HCT116 (cell line): ENCODE measurements at regions of chr10 and their contacts with region 1.

Region 1: GRCh38 chr10:12902135-12902572 is 99.4 kb downstream of the CCDC3 start:
- DNase-seq: peak; percentile 33
- ATAC-seq: peak; percentile 80
- H3K4me3 ChIP-seq: no peak overlapping the region
- H3K27ac ChIP-seq: no peak overlapping the region
- H3K4me1 ChIP-seq: no peaks in the 10 kb centered on the region
- H3K27me3 ChIP-seq: no peaks in the 10 kb centered on the region
- CTCF ChIP-seq: peak; percentile 75 to 93 (median 75)
- POLR2A ChIP-seq: no peak
- RAD21 ChIP-seq: peak; percentile 79

Region 2: GRCh38 chr10:12720217-12720981 is 181.8 kb before region 1 on chr10:
- CTCF ChIA-PET with region 1: interaction called, 10 read pairs
- POLR2A ChIA-PET with region 1: no interaction called
- RAD21 ChIA-PET with region 1: interaction called in 1 of 2 experiments, 3 read pairs
- intact Hi-C with region 1: loop called (anchors 5 kb)
- DNase-seq: peak; percentile 96
- ATAC-seq: peak; percentile 94
- H3K4me3 ChIP-seq: 0 out of 4 replicates have a peak overlapping the region, but pooled peaks of 1 of the 2 experiments have one; percentile 2
- H3K27ac ChIP-seq: peak overlapping the region; percentile 54; the same call in 1 of the 2 replicates
- H3K4me1 ChIP-seq: peaks cover 24 to 27% of the 10 kb centered on the region in 2 experiments
- H3K27me3 ChIP-seq: peaks cover 11% of the 10 kb centered on the region; the same call in 1 of the 2 replicates
- CTCF ChIP-seq: no peak
- POLR2A ChIP-seq: no peak
- RAD21 ChIP-seq: peak; percentile 22; the same call in 1 of the 2 replicates

Region 3: DNA sequence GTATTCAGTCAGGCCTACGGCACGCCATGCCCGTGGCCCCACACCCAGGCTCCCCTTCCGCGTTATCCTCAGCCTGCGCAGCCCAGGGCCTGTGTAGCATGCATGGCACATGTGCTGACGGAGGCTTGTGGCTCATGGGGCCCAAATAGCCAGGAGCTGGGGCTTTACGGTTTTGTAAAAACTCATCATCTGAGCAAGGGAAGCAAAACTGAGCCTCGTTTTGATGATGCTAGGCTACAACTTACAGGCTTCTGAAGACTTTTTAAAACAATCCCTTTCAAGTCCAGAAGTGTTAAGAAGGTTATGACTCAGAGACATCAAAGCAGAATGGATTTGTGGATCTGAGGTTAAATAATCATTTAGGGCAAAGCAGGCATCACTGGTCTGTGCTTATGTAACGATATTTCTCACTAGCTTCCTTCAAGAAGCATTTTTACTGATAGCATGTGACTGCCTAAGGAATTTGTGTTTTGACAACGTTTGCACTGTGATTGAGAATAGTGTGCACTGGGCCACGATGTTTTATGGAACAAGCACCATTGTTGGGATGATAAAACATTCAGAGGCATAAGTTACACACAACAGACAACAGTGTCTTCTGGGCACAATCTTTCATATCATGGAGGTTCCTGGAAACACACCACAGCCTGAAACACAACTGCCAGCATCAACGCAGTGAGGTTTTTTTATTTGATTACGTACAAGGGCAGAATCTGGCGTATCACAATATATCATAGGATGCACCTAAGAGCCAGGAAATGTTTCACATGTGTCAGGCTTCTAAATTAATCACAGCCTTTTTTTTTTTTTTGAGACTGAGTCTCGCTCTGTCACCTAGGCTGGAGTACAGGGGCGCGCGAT is 175.0 kb before region 1 on chr10:
- CTCF ChIA-PET with region 1: interaction called, 10 read pairs
- POLR2A ChIA-PET with region 1: no interaction called
- RAD21 ChIA-PET with region 1: no interaction called
- intact Hi-C with region 1: loop called (anchors 5 kb)
- DNase-seq: no peak
- ATAC-seq: peak; percentile 53
- H3K4me3 ChIP-seq: no peak overlapping the region
- H3K27ac ChIP-seq: no peak overlapping the region
- H3K4me1 ChIP-seq: peaks cover 16 to 23% of the 10 kb centered on the region in 2 experiments
- H3K27me3 ChIP-seq: peaks cover 13% of the 10 kb centered on the region; the same call in 1 of the 2 replicates
- CTCF ChIP-seq: no peak
- POLR2A ChIP-seq: no peak
- RAD21 ChIP-seq: no peak

Region 4: DNA sequence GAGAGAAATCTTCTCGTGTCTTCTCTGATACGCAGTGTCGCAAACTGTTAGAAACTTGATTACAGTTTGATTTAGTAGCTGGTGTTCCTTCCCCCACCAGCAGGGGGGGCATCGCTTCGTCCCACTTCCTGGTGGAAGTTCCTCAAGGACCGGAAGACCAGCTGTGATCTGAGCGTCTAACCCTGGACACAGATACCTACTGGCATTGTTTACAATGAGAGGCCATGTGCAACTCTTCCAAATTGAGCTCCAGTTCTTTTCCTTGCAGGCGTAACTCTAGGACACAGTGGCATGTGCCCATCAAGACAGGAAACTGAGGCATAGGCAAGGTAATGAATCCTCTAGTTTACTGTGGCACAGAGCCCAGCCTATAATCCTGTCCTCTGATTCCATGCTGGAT is 119.6 kb before region 1 on chr10:
- CTCF ChIA-PET with region 1: interaction called, 16 read pairs
- POLR2A ChIA-PET with region 1: no interaction called
- RAD21 ChIA-PET with region 1: interaction called, 3 to 4 read pairs
- intact Hi-C with region 1: loop called (anchors 2 kb)
- DNase-seq: peak; percentile 42
- ATAC-seq: peak; percentile 91
- H3K4me3 ChIP-seq: peak overlapping the region; percentile 20 to 27; a peak in 2 of 4 replicates
- H3K27ac ChIP-seq: no peak overlapping the region
- H3K4me1 ChIP-seq: peaks cover 2 to 9% of the 10 kb centered on the region in 2 experiments; a peak in 3 of 4 replicates
- H3K27me3 ChIP-seq: no peaks in the 10 kb centered on the region
- CTCF ChIP-seq: peak; percentile 50 to 94 (median 92); a peak in 5 of 6 replicates
- POLR2A ChIP-seq: no peak
- RAD21 ChIP-seq: peak; percentile 66

Region 5: GRCh38 chr10:13056456-13057077 is 154.4 kb after region 1 on chr10:
- CTCF ChIA-PET with region 1: interaction called, 3 read pairs
- POLR2A ChIA-PET with region 1: no interaction called
- RAD21 ChIA-PET with region 1: no interaction called
- intact Hi-C with region 1: loop called (anchors 5 kb)
- DNase-seq: no peak
- ATAC-seq: peak; percentile 83
- H3K4me3 ChIP-seq: no peak overlapping the region
- H3K27ac ChIP-seq: no peak overlapping the region
- H3K4me1 ChIP-seq: no peaks in the 10 kb centered on the region
- H3K27me3 ChIP-seq: no peaks in the 10 kb centered on the region
- CTCF ChIP-seq: peak; percentile 49 to 63 (median 56); a peak in 5 of 6 replicates
- POLR2A ChIP-seq: no peak
- RAD21 ChIP-seq: peak; percentile 78

Region 6: DNA sequence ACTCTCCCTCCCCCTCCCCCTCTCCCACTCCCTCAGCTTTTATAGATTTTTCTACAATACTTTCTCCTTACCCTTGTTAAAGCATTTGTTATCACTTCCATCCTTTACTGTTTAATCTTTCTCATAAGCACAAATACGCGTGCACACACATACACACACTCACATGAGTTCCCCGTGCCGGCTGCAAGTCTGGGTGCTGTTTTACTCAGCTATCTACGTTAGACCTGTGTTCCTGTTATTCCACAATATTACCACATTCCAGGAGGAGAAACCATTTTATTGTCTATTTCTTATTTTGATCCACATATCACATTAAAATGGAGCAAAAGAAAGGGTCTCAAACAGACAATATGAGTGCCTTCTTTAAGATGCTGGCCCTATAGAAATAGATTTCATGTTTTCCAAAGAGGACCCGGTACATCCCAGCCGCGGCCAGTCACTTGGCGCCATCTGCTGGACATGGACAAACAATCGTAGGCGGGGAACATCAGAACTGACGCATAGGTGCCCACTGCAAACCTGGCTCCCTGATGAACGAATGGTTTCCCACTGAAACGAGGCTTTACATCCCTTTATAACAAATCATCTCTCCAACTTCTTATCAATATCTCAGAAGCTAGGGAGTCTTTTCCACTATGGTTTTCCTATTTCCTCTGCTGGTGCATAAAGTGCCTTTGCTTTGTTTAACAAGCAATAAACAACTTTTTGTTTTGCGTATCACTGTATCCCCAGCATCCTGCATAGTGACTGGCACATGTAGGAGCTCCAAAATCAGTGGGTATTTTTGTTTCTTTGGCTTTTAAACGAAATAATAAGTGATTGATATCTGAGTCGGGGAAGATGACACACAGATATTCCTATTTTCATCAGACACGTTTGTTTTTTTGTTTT is 172.7 kb after region 1 on chr10:
- CTCF ChIA-PET with region 1: interaction called, 14 read pairs
- POLR2A ChIA-PET with region 1: no interaction called
- RAD21 ChIA-PET with region 1: interaction called in 1 of 2 experiments, 4 read pairs
- intact Hi-C with region 1: loop called (anchors 5 kb)
- DNase-seq: peak; percentile 53
- ATAC-seq: peak; percentile 100
- H3K4me3 ChIP-seq: no peak overlapping the region
- H3K27ac ChIP-seq: no peak overlapping the region
- H3K4me1 ChIP-seq: 0 out of 4 replicates have a peak, but pooled peaks cover 0 to 4% of the 10 kb centered on the region in 2 experiments
- H3K27me3 ChIP-seq: no peaks in the 10 kb centered on the region
- CTCF ChIP-seq: peak; percentile 76 to 89 (median 82)
- POLR2A ChIP-seq: no peak
- RAD21 ChIP-seq: peak; percentile 93